ENCODE measurements at regions of chrX and their contacts with region 1.

Region 1: GRCh38 chrX:155056877-155057792 is 13.8 kb downstream of the CMC4 start:
- DNase-seq: peak; percentile 71
- ATAC-seq: peak; percentile 92

Region 2: GRCh38 chrX:154980330-154981096 is 76.6 kb before region 1 on chrX:
- intact Hi-C with region 1: loop called (anchors 10 kb)
- DNase-seq: peak; percentile 66
- ATAC-seq: peak; percentile 91

Measured in Right ventricle myocardium superior (tissue), 1 donor.